Thyroid gland (tissue), 4 donors: ENCODE measurements at regions of chr17 and their contacts with region 1.

Region 1: DNA sequence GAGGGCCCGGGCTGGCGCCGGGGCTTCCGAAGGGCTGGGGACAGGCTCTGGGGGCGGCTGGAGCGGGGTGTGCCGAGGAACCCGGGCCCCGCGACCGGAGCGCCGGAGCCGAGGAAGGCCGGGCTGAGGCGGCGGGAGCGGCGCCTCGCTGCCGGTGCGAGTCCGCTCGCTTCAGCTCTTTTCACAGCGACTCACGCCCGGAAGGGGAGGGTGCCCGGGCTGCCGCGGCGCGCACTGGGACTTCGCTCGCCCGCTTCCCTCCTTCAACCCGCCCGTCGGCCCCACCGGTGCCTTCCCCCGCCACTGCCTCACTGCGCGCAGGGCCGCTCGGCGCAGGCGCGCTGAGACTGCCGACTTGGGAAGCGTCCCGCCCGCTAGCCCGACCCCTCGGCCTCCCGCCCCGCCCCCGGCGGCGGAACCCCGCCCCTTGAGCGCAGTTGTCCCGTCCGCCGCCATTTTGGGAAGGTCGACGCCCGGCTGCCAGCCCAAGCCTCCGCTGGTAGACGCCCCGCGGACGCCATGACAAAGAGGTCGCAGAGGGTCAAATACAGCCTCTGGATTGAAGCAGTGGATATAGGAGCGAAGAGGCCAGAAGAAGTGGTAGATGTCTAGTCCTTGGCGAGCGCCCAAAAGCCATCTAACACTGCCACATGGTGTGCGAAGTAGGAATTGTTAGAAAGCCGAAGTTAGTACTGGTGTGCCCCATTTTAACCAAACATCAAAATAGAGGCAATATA is at the start of gene UBE2G1:
- DNase-seq: peak; percentile 98
- H3K4me3 ChIP-seq: peak within 1 kb of the TSS; percentile 94 to 97 (median 97)
- H3K27ac ChIP-seq: peak within 1 kb of the TSS; percentile 83 to 91 (median 90)
- H3K4me1 ChIP-seq: peaks cover 8% of the 10 kb centered on the region in 2 donors
- H3K27me3 ChIP-seq: no peaks in the 10 kb centered on the region
- CTCF ChIP-seq: peak in 1 of 6 experiments; percentile 26
- POLR2A ChIP-seq: peak; percentile 60 to 94
- total RNA-seq, gene UBE2G1: 39.1 to 58.0 (median 49.4) TPM

Region 2: GRCh38 chr17:4143563-4144421 is 222.7 kb before region 1 on chr17:
- intact Hi-C with region 1: loop called (anchors 5 kb)
- DNase-seq: peak; percentile 88 to 90
- H3K4me3 ChIP-seq: peak overlapping the region; percentile 66 to 98 (median 72)
- H3K27ac ChIP-seq: peak overlapping the region; percentile 95 to 99 (median 99)
- H3K4me1 ChIP-seq: peaks cover 24 to 27% of the 10 kb centered on the region in 2 donors
- H3K27me3 ChIP-seq: no peaks in the 10 kb centered on the region
- CTCF ChIP-seq: peak in 1 of 6 experiments; percentile 11
- POLR2A ChIP-seq: peak; percentile 16 to 73